ENCODE measurements at regions of chr14 and their contacts with region 1.

Region 1: GRCh38 chr14:22986508-22987054 is 4.2 kb upstream of the AJUBA start:
- DNase-seq: peak; percentile 87 to 98
- H3K4me3 ChIP-seq: no peak overlapping the region
- CTCF ChIP-seq: peak in 1 of 3 donors; percentile 91
- POLR2A ChIP-seq: no peak

Region 2: GRCh38 chr14:22929848-22930364 is 56.7 kb before region 1 on chr14:
- intact Hi-C with region 1: loop called (anchors 2 kb)
- DNase-seq: no peak
- H3K4me3 ChIP-seq: no peak overlapping the region
- CTCF ChIP-seq: no peak
- POLR2A ChIP-seq: no peak

Region 3: DNA sequence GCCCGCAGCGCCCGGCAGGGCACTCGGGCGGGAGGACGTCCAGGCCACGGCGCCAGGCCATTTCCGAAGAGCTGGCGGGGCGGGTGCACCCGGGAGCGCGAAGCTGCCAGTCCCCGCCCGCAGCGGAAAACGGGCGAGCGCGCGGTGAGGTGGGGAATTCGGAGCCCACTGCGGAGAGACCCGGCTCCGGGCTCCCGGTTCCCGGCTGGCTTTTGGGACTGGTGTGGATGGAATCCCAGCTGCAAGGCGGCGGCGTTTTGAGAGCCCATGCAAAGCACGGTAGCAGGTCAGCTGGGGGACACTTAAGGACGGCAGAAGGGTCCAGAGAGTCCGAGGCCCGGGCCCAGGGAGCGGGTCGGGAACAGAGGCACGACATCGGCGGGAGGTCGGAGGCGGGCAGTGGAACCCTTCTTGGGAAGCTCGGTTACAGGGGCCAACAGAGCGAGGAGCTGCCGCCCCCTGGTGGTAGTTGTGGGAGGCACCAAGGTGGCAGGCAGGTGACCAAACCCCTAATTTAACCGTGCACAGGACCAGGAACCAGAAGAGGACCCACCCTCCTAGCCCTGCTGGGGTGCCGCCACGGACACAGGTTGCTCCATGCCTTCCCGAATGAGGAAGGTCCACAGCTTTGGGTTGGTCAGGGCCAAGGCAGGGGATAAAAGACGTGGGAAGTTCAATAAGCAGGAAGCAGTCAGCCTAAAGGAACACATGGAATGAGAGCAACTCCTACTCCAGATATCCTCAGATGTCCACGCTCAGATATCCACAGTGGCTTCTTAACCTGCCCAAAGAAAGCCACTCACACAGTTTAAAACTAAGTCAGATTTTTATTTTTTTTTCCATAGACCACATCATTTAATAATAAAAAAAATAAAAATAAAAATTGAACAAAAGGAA is 71.4 kb after region 1 on chr14:
- intact Hi-C with region 1: loop called (anchors 2 kb)
- DNase-seq: peak; percentile 80 to 98
- H3K4me3 ChIP-seq: peak overlapping the region; percentile 52
- CTCF ChIP-seq: peak in 1 of 3 donors; percentile 89
- POLR2A ChIP-seq: no peak

Measured in lower leg skin (tissue), 4 donors.